ENCODE measurements at regions of chr6 and their contacts with region 1.

Region 1: DNA sequence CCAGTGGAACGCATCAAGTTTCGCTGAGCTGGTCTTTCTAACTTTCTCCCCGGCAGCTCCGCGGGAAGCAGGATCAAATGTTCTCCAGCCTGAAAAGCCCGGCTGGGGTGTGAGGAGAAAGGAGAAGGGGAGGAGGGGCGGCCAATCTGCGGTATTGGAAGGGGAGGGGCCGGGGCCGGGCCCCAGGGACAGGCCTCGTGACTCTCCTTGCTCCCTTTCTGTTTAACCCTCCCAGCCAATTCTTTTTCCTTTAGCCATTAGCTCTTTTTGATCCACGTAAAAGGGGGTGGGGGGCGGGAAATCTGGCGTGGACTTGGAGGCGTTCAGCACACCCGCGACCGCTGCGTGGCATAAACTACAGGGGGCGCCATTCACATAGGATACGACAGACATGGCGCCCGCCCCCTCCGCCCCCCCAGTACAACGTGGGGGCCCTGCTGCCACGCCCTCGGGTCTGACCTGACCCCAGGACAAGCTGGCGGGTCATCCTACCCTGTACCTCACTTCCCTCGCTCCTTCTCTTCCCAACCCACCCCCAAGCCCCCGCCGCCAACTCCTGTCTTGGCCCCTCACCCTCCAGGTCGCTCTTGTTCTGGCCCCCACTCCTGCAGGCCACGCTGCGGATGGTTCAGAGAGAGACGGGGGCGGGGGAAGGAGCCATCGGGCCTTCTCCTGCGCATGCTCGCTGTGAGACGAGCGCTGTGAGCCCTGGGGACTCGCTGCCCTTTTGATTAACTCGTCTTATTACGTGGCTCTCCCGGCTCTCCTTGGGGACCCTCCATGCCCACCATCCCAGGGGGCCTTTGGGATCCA is 7.8 kb upstream of the MDGA1 start:
- DNase-seq: peak; percentile 30
- ATAC-seq: peak; percentile 94
- H3K4me3 ChIP-seq: peak overlapping the region; percentile 38
- H3K27ac ChIP-seq: no peak overlapping the region; the same call in 1 of the 2 replicates
- H3K4me1 ChIP-seq: peaks cover 5% of the 10 kb centered on the region
- H3K27me3 ChIP-seq: peaks cover 0 to 3% of the 10 kb centered on the region in 2 experiments; a peak in 1 of 4 replicates
- CTCF ChIP-seq: peak; percentile 73 to 77 (median 75)
- EP300 ChIP-seq: no peak
- POLR2A ChIP-seq: peak; percentile 40
- RAD21 ChIP-seq: peak; percentile 64

Region 2: DNA sequence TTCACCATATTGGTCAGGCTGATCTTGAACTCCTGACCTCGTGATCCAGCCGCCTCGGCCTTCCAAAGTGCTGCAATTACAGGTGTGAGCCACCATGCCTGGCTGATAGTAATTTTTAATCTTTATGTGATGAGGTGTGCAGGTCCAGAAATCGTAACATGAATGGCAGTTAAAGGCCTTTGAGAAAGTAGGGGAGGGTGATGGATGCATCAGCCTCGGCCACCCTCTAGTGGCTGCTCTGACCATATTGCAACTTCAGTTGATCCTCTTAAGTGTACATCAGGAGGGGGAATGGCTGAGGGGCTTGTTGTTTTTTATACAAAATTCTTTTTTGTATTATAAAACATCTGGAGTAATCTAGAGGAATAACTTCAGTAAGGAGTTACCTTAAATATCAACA is 307.1 kb after region 1 on chr6:
- CTCF ChIA-PET with region 1: interaction called, 17 read pairs
- POLR2A ChIA-PET with region 1: no interaction called
- RAD21 ChIA-PET with region 1: interaction called, 14 read pairs
- SMC1A ChIA-PET with region 1: interaction called, 8 read pairs
- in situ Hi-C with region 1: loop called (anchors 25 kb)
- intact Hi-C with region 1: loop called (anchors 2 kb)
- DNase-seq: no peak
- ATAC-seq: peak; percentile 94
- H3K4me3 ChIP-seq: no peak overlapping the region
- H3K27ac ChIP-seq: no peak overlapping the region
- H3K4me1 ChIP-seq: no peaks in the 10 kb centered on the region
- H3K27me3 ChIP-seq: no peaks in the 10 kb centered on the region
- CTCF ChIP-seq: peak; percentile 72 to 85 (median 76)
- EP300 ChIP-seq: no peak
- POLR2A ChIP-seq: no peak
- RAD21 ChIP-seq: peak; percentile 90

Region 3: DNA sequence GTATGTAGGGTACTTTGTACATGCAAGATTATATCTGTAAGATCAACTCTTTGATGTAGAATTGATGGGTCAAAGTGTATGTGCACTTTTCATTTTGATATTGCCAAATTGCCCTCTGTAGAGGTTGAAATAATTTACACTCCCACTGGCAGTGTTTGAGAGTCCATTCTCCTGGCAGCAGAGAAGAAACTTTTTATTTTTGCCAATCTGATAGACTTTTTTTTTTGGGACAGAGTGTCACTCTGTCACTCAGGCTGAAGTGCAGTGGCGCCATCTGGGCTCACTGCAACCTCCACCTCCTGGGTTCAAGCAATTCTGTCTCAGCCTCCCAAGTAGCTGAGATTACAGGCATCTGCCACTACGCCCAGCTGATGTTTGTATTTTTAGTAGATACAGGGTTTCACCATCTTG is 313.3 kb after region 1 on chr6:
- CTCF ChIA-PET with region 1: interaction called, 14 read pairs
- POLR2A ChIA-PET with region 1: no interaction called
- RAD21 ChIA-PET with region 1: interaction called, 3 read pairs
- SMC1A ChIA-PET with region 1: interaction called, 8 read pairs
- in situ Hi-C with region 1: loop called (anchors 25 kb)
- intact Hi-C with region 1: loop called (anchors 2 kb)
- DNase-seq: no peak
- ATAC-seq: no peak
- H3K4me3 ChIP-seq: no peak overlapping the region
- H3K27ac ChIP-seq: no peak overlapping the region
- H3K4me1 ChIP-seq: no peaks in the 10 kb centered on the region
- H3K27me3 ChIP-seq: no peaks in the 10 kb centered on the region
- CTCF ChIP-seq: 0 out of 6 replicates have a peak, but pooled peaks of 1 of the 3 experiments have one; percentile 1
- EP300 ChIP-seq: no peak
- POLR2A ChIP-seq: no peak
- RAD21 ChIP-seq: no peak

Region 4: GRCh38 chr6:38784506-38785235 is 1079.2 kb after region 1 on chr6:
- CTCF ChIA-PET with region 1: no interaction called
- POLR2A ChIA-PET with region 1: no interaction called
- RAD21 ChIA-PET with region 1: no interaction called
- SMC1A ChIA-PET with region 1: no interaction called
- in situ Hi-C with region 1: no loop called
- intact Hi-C with region 1: no loop called
- DNase-seq: no peak
- ATAC-seq: no peak
- H3K4me3 ChIP-seq: no peak overlapping the region
- H3K27ac ChIP-seq: no peak overlapping the region
- H3K4me1 ChIP-seq: peaks cover 6% of the 10 kb centered on the region; the same call in 1 of the 2 replicates
- H3K27me3 ChIP-seq: no peaks in the 10 kb centered on the region
- CTCF ChIP-seq: no peak
- EP300 ChIP-seq: no peak
- POLR2A ChIP-seq: no peak
- RAD21 ChIP-seq: no peak

Measured in GM12878 (cell line).